HepG2 (cell line): ENCODE measurements at regions of chr4 and their contacts with region 1.

Region 1: DNA sequence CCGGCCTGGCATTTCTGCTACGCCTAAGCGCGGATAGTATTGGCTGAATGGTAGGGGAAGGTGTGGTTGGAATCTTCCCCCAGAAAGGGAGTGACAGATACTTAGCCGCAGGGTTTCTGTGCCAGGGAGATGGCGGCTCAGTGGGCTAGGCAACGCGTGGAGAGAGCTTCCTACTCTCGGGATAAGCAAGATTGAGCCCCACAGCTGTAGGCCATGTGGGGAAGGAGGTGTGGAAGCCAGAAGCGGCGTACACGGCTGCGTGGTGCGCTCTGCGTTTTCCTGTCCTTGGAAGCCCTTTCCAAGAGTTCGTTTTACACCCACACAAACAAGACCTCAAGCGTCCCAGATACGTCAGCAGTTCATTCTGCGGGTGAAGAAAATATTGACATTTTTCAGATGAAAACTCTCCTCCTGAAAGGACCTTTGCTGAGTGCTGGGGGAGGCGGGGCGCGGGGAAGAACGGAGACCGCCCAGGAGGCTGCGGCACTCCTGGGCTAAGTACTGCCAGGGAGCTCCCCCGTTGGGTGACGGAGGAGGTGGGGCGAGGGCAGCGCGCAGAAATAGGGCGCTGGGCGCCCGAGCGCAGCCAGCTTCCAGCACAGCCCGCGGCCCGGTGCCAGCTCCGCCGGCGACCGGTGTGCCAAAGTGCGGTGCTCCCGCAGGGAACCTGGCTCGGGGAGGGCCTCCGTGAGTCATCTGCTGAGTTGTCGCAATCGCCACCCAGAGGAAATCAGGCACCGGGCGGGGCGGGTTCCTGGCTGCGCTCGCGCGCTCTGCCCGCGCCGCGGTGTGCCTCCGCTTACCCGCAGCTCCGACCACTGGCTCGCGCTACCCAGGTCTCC is at the start of gene GPAT3:
- DNase-seq: peak; percentile 64
- ATAC-seq: peak; percentile 91
- H3K4me3 ChIP-seq: peak within 1 kb of the TSS; percentile 56 to 86 (median 68)
- H3K27ac ChIP-seq: no peak within 1 kb of the TSS
- H3K4me1 ChIP-seq: peaks cover 34% of the 10 kb centered on the region
- H3K27me3 ChIP-seq: peaks cover 0 to 20% of the 10 kb centered on the region in 2 experiments; a peak in 3 of 5 replicates
- CTCF ChIP-seq: no peak
- EP300 ChIP-seq: 0 out of 4 replicates have a peak, but pooled peaks of 1 of the 2 experiments have one; percentile 28
- POLR2A ChIP-seq: peak in 1 of 2 experiments; percentile 49; a peak in 2 of 4 replicates
- RAD21 ChIP-seq: no peak
- total RNA-seq, gene GPAT3: 1.6 and 2.6 TPM in 2 replicates

Region 2: GRCh38 chr4:83484500-83485461 is 51.0 kb before region 1 on chr4 and contains the start of gene ABRAXAS1:
- CTCF ChIA-PET with region 1: no interaction called
- POLR2A ChIA-PET with region 1: interaction called, 3 read pairs
- in situ Hi-C with region 1: no loop called
- intact Hi-C with region 1: loop called (anchors 5 kb)
- DNase-seq: peak; percentile 91
- ATAC-seq: peak; percentile 93
- H3K4me3 ChIP-seq: peak within 1 kb of the TSS; percentile 62 to 78 (median 72)
- H3K27ac ChIP-seq: peak within 1 kb of the TSS; percentile 74
- H3K4me1 ChIP-seq: peaks cover 37% of the 10 kb centered on the region
- H3K27me3 ChIP-seq: no peaks in the 10 kb centered on the region
- CTCF ChIP-seq: no peak
- EP300 ChIP-seq: no peak
- POLR2A ChIP-seq: peak; percentile 84 to 94
- RAD21 ChIP-seq: 0 out of 2 replicates have a peak, but pooled peaks have one; percentile 22
- total RNA-seq, gene ABRAXAS1: 14.1 and 20.8 TPM in 2 replicates

Region 3: GRCh38 chr4:83582289-83582769 is 46.6 kb after region 1 on chr4:
- CTCF ChIA-PET with region 1: no interaction called
- POLR2A ChIA-PET with region 1: no interaction called
- in situ Hi-C with region 1: no loop called
- intact Hi-C with region 1: loop called (anchors 5 kb)
- DNase-seq: no peak
- ATAC-seq: peak; percentile 64
- H3K4me3 ChIP-seq: no peak overlapping the region
- H3K27ac ChIP-seq: no peak overlapping the region
- H3K4me1 ChIP-seq: peaks cover 7% of the 10 kb centered on the region
- H3K27me3 ChIP-seq: no peaks in the 10 kb centered on the region; a peak in 1 of 5 replicates
- CTCF ChIP-seq: peak; percentile 52
- EP300 ChIP-seq: no peak
- POLR2A ChIP-seq: no peak
- RAD21 ChIP-seq: no peak